CD8-positive, alpha-beta T cell (primary cell): ENCODE measurements at regions of chr18 and their contacts with region 1.

Region 1: GRCh38 chr18:69432847-69433246 is 32.2 kb downstream of the DOK6 start:
- DNase-seq: no peak
- ATAC-seq: no peak
- H3K4me3 ChIP-seq: no peak overlapping the region
- H3K4me3 Mint-ChIP-seq: no peak overlapping the region
- H3K27ac ChIP-seq: no peak overlapping the region
- H3K27ac Mint-ChIP-seq: no peak overlapping the region
- H3K4me1 ChIP-seq: no peaks in the 10 kb centered on the region
- H3K4me1 Mint-ChIP-seq: no peaks in the 10 kb centered on the region
- H3K27me3 ChIP-seq: no peaks in the 10 kb centered on the region
- H3K27me3 Mint-ChIP-seq: no peaks in the 10 kb centered on the region
- CTCF ChIP-seq: no peak

Region 2: GRCh38 chr18:68417826-68418225 is 1015.0 kb before region 1 on chr18:
- CTCF ChIA-PET with region 1: no interaction called
- POLR2A ChIA-PET with region 1: no interaction called
- intact Hi-C with region 1: loop called in 1 of 2 experiments (anchors 5 kb)
- DNase-seq: no peak
- ATAC-seq: no peak
- H3K4me3 ChIP-seq: no peak overlapping the region
- H3K4me3 Mint-ChIP-seq: no peak overlapping the region
- H3K27ac ChIP-seq: no peak overlapping the region
- H3K27ac Mint-ChIP-seq: no peak overlapping the region
- H3K4me1 ChIP-seq: no peaks in the 10 kb centered on the region
- H3K4me1 Mint-ChIP-seq: no peaks in the 10 kb centered on the region
- H3K27me3 ChIP-seq: no peaks in the 10 kb centered on the region
- H3K27me3 Mint-ChIP-seq: no peaks in the 10 kb centered on the region
- CTCF ChIP-seq: no peak